ENCODE measurements at regions of chr17 and their contacts with region 1.

Region 1: DNA sequence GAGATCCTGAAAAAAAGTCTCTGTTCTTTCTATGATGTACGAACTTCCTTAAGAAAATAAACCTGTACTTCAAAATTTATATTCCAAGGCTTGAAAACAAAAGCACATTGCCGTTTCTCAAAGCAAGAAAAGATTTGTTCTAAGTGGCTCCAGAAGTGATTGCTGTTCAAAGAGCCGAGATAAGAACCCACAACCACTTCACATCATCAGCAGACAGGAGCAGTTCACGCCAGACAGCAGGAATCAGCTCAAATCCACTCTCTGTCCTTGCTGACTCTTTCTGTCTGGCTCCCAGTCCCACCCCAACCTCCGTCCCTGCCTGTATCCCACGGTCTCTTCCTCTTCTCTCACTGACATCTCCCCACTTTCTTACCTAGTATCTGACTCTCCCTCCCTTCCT is 85.0 kb upstream of the MYOCD start:
- DNase-seq: no peak
- H3K4me3 ChIP-seq: no peak overlapping the region
- H3K27ac ChIP-seq: no peak overlapping the region
- H3K4me1 ChIP-seq: no peaks in the 10 kb centered on the region
- H3K27me3 ChIP-seq: no peaks in the 10 kb centered on the region
- CTCF ChIP-seq: no peak

Region 2: GRCh38 chr17:12605222-12605621 is 24.6 kb after region 1 on chr17:
- CTCF ChIA-PET with region 1: no interaction called
- dilution Hi-C with region 1: no loop called
- in situ Hi-C with region 1: no loop called
- intact Hi-C with region 1: no loop called
- DNase-seq: no peak
- H3K4me3 ChIP-seq: no peak overlapping the region
- H3K27ac ChIP-seq: no peak overlapping the region
- H3K4me1 ChIP-seq: no peaks in the 10 kb centered on the region
- H3K27me3 ChIP-seq: no peaks in the 10 kb centered on the region
- CTCF ChIP-seq: no peak

Region 3: DNA sequence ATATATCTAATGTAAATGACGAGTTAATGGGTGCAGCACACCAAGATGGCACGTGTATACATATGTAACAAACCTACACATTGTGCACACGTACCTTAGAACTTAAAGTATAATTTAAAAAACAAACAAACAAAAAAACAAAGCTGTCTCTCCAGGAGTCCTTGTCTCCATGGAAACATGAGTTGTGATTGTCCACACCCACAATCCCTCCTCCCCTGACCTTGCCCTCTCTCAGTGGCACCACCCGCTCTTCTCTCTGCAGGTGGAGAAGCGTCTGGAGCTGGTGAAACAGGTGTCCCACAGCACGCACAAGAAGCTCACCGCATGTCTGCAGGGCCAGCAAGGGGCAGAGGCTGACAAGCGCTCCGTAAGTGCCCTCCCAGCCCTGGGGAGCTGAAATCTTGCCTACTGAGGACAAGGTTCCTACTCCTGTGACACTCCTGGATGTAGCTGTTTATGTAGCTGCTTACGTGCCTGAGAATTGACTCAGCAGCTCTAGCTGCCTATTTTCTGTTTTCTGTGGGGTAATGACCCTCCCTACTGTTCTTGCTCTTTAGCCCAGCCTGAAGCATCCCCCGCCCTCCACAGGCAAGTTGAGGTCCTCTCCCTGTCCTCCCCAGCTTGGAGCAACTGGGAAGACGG is 315.6 kb after region 1 on chr17:
- CTCF ChIA-PET with region 1: no interaction called
- dilution Hi-C with region 1: no loop called
- in situ Hi-C with region 1: no loop called
- intact Hi-C with region 1: loop called (anchors 10 kb)
- DNase-seq: no peak
- H3K4me3 ChIP-seq: no peak overlapping the region
- H3K27ac ChIP-seq: no peak overlapping the region
- H3K4me1 ChIP-seq: no peaks in the 10 kb centered on the region
- H3K27me3 ChIP-seq: no peaks in the 10 kb centered on the region
- CTCF ChIP-seq: no peak